MCF 10A (cell line): ENCODE measurements at regions of chr5 and their contacts with region 1.

Region 1: DNA sequence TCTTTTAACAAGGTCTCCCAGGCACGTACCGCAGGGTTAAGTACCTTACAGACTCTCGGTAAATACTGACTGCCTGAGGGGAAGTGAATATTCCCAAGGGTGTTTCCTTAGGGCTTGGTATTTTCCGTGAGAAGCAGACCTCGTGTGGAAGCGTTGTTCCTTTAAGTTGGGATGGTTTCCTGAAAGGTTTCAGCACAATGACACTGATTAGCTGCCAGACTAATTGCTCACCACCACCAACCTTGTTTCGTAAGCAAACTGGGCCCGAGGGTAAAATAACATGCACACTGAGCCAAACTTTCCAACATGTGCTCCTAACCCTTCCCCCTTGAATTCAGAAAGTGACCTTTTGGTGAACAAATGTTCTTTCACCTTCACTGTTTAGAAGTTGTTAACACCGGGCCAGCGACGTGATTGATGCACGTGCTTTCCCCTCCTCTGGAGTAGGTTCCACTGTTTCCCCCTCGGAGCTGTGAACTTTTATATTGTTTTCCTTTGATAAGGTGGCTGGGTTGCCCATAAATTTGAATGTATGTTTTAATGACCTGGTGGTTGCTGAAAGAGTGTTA is 128.1 kb upstream of the RPS23 start:
- DNase-seq: peak; percentile 99
- H3K4me3 Mint-ChIP-seq: peak overlapping the region; percentile 62
- H3K27ac Mint-ChIP-seq: peak overlapping the region; percentile 98
- H3K4me1 Mint-ChIP-seq: peaks cover 26% of the 10 kb centered on the region
- H3K27me3 Mint-ChIP-seq: no peaks in the 10 kb centered on the region
- CTCF ChIP-seq: no peak

Region 2: DNA sequence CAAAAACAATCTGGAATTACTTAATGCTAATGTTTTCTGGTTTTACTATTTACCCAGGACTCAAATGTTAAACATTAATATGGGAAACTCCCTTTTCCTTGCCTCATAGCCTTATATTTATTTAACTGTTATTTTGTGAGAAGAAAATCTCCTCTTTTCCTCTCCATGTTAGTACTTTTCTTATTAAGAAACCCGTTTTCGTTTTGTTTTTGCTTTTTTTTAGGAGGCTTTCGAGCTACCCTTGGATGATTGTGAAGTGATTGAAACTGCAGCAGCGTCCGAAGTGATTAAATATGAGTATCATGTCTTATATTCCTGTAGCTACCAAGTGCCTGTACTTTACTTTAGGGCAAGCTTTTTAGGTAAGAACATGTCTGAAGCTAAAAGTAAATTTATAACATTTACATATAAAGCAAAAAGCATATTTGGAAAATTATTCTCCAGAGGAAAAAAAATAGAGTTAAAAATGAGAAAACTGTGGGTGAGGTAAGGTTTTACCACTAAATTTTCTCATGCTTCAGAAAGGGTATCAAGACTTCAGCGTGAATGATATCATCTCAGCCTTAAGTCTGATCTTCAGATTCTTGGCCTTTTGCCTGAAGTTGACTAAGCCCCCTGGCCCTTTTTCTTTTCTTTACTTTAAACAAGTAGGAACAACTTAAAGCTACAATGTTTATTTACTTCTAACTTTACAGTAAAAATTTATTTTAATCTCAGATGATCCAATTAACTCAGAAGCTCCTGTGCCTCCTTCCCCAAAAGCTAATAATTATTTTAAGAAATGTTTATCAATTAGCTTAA is 241.9 kb before region 1 on chr5:
- CTCF ChIA-PET with region 1: no interaction called
- POLR2A ChIA-PET with region 1: no interaction called
- intact Hi-C with region 1: no loop called
- DNase-seq: peak; percentile 75
- H3K4me3 Mint-ChIP-seq: peak overlapping the region; percentile 11
- H3K27ac Mint-ChIP-seq: peak overlapping the region; percentile 88
- H3K4me1 Mint-ChIP-seq: peaks cover 49% of the 10 kb centered on the region
- H3K27me3 Mint-ChIP-seq: no peaks in the 10 kb centered on the region
- CTCF ChIP-seq: no peak

Region 3: DNA sequence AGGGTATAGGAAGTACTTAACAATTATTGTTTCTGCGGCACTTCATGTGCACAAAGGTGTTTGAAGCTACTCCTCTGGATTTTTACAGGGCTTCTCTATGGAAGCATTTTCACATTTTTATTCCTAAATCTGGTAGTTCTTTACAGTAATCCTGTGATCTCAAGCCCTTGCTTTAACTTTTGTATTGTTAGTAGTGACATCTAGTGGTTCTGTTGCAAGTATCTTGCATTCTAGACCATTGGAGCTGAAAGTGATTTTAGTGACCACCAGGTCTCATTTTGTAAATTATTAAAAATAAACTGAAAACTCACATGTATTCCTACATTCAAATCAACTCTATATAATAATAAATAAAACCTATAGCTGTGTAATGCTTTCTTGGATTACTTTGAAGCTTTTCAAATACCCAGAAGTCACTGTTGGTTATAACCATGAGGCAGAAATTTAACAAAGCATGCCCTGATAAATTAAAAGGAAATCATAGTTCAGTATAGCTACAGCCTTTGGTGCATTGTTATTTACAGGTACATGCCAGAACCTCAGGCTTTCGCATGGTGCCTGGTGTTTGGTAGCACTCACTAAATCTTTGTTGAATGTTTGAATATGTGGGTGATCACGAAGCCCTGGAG is 147.0 kb before region 1 on chr5:
- CTCF ChIA-PET with region 1: no interaction called
- POLR2A ChIA-PET with region 1: no interaction called
- intact Hi-C with region 1: no loop called
- DNase-seq: peak; percentile 25
- H3K4me3 Mint-ChIP-seq: no peak overlapping the region
- H3K27ac Mint-ChIP-seq: no peak overlapping the region
- H3K4me1 Mint-ChIP-seq: no peaks in the 10 kb centered on the region
- H3K27me3 Mint-ChIP-seq: no peaks in the 10 kb centered on the region
- CTCF ChIP-seq: peak; percentile 24

Region 4: GRCh38 chr5:82278095-82278918 is 128.0 kb before region 1 on chr5 and contains the start of gene RPS23:
- CTCF ChIA-PET with region 1: no interaction called
- POLR2A ChIA-PET with region 1: no interaction called
- intact Hi-C with region 1: loop called (anchors 5 kb)
- DNase-seq: peak; percentile 95
- H3K4me3 Mint-ChIP-seq: peak within 1 kb of the TSS; percentile 96
- H3K27ac Mint-ChIP-seq: peak within 1 kb of the TSS; percentile 99
- H3K4me1 Mint-ChIP-seq: peaks cover 19% of the 10 kb centered on the region
- H3K27me3 Mint-ChIP-seq: no peaks in the 10 kb centered on the region
- CTCF ChIP-seq: no peak
- total RNA-seq, gene RPS23: 2,870 and 3,151 TPM in 2 replicates

Region 5: DNA sequence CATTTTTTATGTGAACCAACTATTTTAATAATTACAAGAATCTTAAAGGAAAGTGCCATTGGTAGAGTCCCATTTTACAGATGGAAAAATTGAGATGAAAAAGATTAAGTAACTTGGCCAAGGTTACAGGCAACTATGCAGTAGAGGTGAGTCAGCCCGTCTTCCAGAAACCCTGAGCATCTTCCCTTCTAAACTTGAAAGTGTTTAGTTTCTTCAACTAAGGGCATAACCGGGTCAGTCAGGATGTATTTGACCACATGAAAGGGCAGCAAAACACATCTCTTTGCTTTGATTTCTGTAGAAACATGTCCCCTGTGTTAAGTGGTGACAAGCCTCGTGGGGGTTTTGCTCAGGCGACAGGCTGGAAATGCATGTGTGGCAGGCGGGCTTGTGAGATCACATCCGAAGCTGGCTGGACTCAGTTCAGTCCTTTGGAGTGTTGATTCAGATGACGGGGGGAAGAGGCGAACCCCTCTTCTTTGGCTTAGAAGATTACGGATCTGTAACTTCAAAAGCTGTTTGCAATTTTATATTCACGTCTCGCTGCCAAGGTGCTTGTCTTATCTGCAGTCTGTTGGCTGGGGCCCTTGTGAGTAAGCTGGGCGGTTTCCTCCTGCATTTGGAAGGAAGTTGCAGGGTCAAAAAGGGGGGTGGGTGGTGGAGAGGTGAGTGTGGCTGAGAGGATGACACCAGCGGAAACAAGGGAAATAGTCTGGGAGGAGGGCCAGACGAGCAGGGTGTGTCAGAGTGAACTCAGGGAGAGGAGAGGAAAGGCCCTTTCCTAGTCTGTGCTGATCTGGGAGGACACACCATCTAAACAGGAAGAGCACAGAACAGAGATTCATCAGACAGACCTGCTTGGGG is 49.2 kb before region 1 on chr5:
- CTCF ChIA-PET with region 1: interaction called, 3 read pairs
- POLR2A ChIA-PET with region 1: interaction called, 9 read pairs
- intact Hi-C with region 1: loop called (anchors 2 kb)
- DNase-seq: peak; percentile 99
- H3K4me3 Mint-ChIP-seq: peak overlapping the region; percentile 55
- H3K27ac Mint-ChIP-seq: peak overlapping the region; percentile 84
- H3K4me1 Mint-ChIP-seq: peaks cover 49% of the 10 kb centered on the region
- H3K27me3 Mint-ChIP-seq: no peaks in the 10 kb centered on the region
- CTCF ChIP-seq: no peak

Region 6: DNA sequence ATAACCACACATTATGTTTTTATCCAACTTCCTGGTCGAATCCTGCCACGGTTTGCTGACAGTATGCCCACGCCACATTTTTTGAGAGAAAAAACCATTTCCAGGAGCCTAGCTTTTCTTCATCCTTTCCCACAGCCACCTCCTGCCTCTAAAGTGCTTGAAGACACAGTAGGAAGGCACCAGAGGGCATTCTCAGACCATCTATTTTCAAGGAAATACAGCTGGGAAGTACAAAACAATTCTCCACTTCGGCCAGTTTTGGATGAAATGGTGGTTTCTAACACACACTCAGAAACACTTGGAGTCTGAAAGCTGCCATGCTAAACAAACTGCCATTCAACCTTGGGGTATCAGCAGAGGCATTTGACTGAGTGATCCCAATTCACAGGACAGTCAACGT is 41.8 kb before region 1 on chr5:
- CTCF ChIA-PET with region 1: interaction called, 3 read pairs
- POLR2A ChIA-PET with region 1: no interaction called
- intact Hi-C with region 1: loop called (anchors 1 kb)
- DNase-seq: peak; percentile 73
- H3K4me3 Mint-ChIP-seq: no peak overlapping the region
- H3K27ac Mint-ChIP-seq: no peak overlapping the region
- H3K4me1 Mint-ChIP-seq: peaks cover 31% of the 10 kb centered on the region
- H3K27me3 Mint-ChIP-seq: no peaks in the 10 kb centered on the region
- CTCF ChIP-seq: peak; percentile 54

Region 7: DNA sequence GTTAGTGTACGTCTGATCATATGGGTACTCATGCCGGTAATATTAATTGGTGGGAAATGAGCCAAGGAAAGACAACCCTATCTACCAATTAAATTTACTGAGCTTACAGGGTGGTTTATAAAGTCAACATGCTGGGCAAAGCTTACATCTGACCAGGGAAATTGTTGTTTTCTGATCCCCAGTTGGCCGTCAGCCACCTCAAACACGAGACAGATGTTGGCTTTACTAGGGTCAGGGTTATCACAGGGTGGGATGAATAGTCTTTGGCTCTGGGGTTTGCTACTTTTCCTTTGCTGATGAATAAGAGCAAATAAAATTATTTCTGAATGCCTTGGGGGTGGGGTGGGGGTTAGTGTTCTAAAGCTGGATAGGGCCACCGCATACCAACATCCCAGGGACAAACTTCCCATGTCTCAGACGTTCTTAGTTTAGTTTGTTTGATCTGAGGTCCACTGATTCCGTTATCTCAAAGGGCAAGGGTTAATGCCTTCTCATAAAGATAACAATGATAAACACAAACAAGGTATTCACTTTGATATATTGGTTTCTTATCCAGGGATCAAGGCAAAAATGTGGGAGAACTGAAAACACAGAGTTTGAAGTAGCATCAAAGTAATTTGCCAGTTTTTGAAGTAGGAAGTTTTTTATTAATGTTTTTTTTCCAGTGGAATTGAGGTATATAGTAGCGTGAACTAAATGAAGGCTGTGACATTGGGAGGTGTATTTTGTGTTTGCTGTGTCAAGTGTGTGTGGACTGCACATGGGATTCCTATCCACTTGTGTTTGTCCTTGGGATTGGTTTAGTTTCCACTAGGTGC is 19.1 kb before region 1 on chr5:
- CTCF ChIA-PET with region 1: no interaction called
- POLR2A ChIA-PET with region 1: no interaction called
- intact Hi-C with region 1: no loop called
- DNase-seq: peak; percentile 37
- H3K4me3 Mint-ChIP-seq: no peak overlapping the region
- H3K27ac Mint-ChIP-seq: peak overlapping the region; percentile 17
- H3K4me1 Mint-ChIP-seq: peaks cover 20% of the 10 kb centered on the region
- H3K27me3 Mint-ChIP-seq: no peaks in the 10 kb centered on the region
- CTCF ChIP-seq: no peak

Region 8: DNA sequence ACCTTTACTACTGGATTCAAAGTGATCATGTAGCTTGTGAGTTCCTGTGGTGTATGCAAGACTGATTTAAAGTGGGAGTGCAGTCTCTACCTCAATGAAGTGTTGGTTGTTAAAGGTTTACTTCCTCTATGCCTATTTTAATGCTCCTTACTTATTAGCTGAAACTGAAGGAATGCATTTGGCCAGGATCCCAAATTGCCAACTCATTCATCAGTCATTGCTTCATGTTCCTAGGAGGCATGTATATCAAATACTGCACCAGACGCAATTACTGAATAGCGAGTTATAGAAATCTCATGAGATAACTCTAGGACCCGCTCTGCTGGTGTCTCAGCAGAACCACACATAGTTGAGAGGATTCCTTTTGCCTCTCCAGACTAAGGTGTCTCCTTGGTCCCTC is 14.8 kb after region 1 on chr5:
- CTCF ChIA-PET with region 1: interaction called, 8 read pairs
- POLR2A ChIA-PET with region 1: interaction called, 21 read pairs
- intact Hi-C with region 1: loop called (anchors 1 kb)
- DNase-seq: peak; percentile 99
- H3K4me3 Mint-ChIP-seq: no peak overlapping the region
- H3K27ac Mint-ChIP-seq: no peak overlapping the region
- H3K4me1 Mint-ChIP-seq: peaks cover 51% of the 10 kb centered on the region
- H3K27me3 Mint-ChIP-seq: no peaks in the 10 kb centered on the region
- CTCF ChIP-seq: peak; percentile 49